ENCODE measurements at regions of chr14 and their contacts with region 1.

Region 1: DNA sequence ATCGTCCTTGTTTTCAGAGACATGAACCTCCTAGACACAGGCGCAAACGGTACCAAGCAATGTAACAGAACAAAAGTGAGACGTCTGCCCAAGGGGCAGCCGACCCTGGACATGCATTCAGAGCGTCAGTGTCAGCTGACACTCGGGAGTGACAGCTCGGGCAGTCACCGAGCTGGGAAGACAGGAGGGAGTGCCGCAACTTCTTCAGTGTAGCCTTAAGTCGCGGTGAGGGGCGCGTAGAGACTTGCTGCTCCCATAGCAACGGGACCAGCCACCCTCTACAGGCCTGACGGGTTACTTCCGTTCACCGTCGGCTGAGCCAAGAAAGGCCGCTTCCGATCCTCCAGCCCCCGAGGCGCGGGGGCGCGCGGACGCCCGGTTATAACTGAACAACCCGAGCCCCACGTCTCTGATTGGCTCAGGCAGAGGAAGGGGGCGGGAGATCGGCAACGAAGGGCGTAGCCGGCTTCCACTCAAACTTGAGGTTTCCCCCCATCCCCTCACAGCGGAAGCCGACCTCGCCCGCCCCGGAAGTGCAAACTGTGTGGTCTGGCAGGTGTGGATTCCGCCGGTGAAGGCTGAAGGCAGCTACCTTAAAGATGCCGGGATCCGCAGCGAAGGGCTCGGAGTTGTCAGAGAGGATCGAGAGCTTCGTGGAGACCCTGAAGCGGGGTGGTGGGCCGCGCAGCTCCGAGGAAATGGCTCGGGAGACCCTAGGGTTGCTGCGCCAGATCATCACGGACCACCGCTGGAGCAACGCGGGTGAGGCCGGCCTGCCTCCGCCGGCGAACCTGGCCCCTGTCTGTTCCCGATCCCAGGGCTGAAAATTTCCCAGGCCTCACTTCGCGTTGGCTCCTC is at the start of gene EIF2B2:
- DNase-seq: peak; percentile 97
- ATAC-seq: peak; percentile 98
- H3K4me3 ChIP-seq: peak within 1 kb of the TSS; percentile 89
- H3K27ac ChIP-seq: peak within 1 kb of the TSS; percentile 25
- H3K4me1 ChIP-seq: peaks cover 28% of the 10 kb centered on the region
- H3K27me3 ChIP-seq: no peaks in the 10 kb centered on the region
- CTCF ChIP-seq: no peak
- total RNA-seq, gene EIF2B2: 96.8 and 113 TPM in 2 replicates

Region 2: GRCh38 chr14:74945823-74946682 is 56.6 kb before region 1 on chr14:
- CTCF ChIA-PET with region 1: no interaction called
- POLR2A ChIA-PET with region 1: interaction called, 4 read pairs
- intact Hi-C with region 1: loop called (anchors 2 kb)
- DNase-seq: peak; percentile 85
- ATAC-seq: peak; percentile 87
- H3K4me3 ChIP-seq: peak overlapping the region; percentile 6; the same call in 1 of the 2 replicates
- H3K27ac ChIP-seq: peak overlapping the region; percentile 71
- H3K4me1 ChIP-seq: peaks cover 15% of the 10 kb centered on the region
- H3K27me3 ChIP-seq: no peaks in the 10 kb centered on the region
- CTCF ChIP-seq: peak; percentile 95

Region 3: DNA sequence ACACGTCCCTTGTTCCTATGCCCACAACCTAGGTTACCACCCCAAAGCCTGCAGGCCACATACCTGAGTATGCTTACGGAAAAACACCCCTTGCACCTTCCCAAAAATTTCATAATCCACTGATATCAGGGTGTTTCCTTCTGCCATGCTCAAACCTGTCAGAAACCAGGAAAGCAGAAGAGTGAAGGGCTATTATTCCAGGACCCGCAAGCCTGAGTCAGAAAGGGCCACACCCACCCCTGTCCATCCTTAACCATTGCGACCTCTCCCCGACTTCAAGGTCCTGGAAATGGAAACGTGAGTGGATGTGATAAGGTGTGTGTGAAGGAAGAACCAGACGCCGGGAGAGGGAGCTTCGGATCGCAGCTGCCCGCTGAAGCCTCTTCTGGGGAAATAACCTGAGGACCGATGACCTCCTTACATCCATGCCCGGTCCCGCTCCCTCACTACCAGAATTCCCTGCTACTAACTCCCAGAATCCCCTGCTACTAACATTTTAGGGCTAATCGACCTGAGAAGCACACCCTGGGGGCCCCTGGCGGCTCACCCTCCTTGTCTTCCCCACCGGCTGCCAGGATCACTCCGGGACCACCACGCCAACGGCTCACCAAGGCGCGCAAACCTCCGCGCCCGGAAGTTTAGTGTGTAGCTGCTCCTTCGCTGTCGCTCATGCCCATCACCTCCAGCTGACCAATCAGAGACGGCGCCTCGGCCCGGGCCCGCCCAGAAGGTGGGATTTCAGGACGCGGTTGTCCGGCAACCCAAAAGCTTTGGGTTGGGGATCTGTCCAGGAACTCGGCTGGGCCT is 61.0 kb after region 1 on chr14 and contains the start of gene ACYP1:
- CTCF ChIA-PET with region 1: no interaction called
- POLR2A ChIA-PET with region 1: no interaction called
- intact Hi-C with region 1: loop called (anchors 5 kb)
- DNase-seq: peak; percentile 93
- ATAC-seq: peak; percentile 95
- H3K4me3 ChIP-seq: peak within 1 kb of the TSS; percentile 78
- H3K27ac ChIP-seq: peak within 1 kb of the TSS; percentile 59
- H3K4me1 ChIP-seq: peaks cover 15% of the 10 kb centered on the region
- H3K27me3 ChIP-seq: no peaks in the 10 kb centered on the region
- CTCF ChIP-seq: peak; percentile 17; the same call in 1 of the 2 replicates
- total RNA-seq, gene ACYP1: 22.6 and 23.5 TPM in 2 replicates

Measured in PC-3 (cell line).